Dorsolateral prefrontal cortex (tissue), 120 donors: ENCODE measurements at regions of chr12 and their contacts with region 1.

Region 1: DNA sequence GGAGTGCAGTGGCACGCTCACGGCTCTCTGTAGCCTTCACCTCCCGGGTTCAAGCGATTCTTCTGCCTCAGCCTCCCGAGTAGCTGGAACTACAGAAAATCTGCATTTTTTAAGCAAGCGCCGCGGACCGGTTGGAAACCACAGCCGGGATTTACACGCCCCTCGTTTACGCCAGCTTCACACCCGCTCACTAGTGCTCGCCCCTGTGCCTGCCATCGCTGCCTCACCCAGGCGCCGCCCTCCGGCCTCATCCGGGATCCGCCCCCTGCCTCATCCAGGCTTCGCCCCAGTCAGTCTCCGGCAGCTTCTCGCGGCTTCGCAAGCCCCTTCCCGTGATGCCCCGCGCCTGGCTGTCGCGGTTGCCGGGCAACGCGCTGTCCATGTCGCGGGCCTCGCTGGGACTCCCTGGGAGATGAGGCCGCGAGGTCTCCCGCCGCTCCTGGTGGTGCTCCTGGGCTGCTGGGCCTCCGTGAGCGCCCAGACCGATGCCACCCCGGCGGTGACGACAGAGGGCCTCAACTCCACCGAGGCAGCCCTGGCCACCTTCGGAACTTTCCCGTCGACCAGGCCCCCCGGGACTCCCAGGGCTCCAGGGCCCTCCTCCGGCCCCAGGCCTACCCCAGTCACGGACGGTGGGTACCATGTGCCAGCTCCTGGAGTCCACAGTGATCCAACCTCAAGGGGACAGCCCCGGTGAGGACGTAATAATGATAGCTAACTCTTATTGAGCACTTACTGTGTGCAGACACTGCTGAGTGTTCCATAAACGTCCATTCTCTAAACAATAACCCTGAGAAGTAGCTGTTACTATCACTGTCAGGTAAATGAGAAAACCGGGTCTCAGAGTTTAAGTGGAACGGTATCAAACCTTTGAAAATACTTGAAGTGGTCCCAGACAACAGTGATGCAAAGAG is at the start of gene TCTN1:
- DNase-seq: peak; percentile 94 to 98 (median 96)
- H3K4me3 ChIP-seq: peak within 1 kb of the TSS; percentile 61 to 98 (median 82)
- H3K27ac ChIP-seq: peak within 1 kb of the TSS in 58 of 59 donors; percentile 52 to 92 (median 81)
- H3K27me3 ChIP-seq: no peaks in the 10 kb centered on the region
- CTCF ChIP-seq: peak in 53 of 56 donors; percentile 13 to 68 (median 43)
- total RNA-seq, gene TCTN1: 26.4 to 77.4 (median 40.6) TPM

Region 2: DNA sequence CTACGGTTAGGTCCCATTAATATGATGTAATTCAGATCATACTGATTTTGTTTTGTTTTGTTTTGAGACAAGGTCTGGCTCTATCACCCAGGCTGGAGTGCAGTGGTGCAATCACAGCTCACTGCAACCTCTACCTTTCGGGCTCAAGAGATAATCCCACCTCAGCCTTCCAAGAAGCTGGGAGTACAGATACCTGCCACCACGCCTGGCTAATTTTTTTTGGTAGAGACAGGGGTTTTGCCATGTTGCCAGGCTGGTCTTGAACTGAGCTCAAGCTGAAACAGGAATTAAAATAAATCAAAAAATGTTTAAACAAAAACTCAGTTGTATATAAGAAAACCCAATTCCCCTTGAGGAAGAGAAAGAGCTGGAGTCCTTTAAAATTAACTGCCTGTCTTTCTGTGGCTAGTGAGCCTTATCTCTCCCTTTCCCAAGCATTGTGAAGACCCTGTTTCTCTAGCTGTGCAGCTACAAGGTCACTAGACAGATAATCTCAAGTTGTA is 192.8 kb before region 1 on chr12:
- intact Hi-C with region 1: no loop called
- DNase-seq: no peak
- H3K4me3 ChIP-seq: no peak overlapping the region
- H3K27ac ChIP-seq: peak overlapping the region in 7 of 59 donors; percentile 3 to 26 (median 12)
- H3K27me3 ChIP-seq: peaks cover 0 to 4% (median 0%) of the 10 kb centered on the region in 45 donors
- CTCF ChIP-seq: no peak

Region 3: DNA sequence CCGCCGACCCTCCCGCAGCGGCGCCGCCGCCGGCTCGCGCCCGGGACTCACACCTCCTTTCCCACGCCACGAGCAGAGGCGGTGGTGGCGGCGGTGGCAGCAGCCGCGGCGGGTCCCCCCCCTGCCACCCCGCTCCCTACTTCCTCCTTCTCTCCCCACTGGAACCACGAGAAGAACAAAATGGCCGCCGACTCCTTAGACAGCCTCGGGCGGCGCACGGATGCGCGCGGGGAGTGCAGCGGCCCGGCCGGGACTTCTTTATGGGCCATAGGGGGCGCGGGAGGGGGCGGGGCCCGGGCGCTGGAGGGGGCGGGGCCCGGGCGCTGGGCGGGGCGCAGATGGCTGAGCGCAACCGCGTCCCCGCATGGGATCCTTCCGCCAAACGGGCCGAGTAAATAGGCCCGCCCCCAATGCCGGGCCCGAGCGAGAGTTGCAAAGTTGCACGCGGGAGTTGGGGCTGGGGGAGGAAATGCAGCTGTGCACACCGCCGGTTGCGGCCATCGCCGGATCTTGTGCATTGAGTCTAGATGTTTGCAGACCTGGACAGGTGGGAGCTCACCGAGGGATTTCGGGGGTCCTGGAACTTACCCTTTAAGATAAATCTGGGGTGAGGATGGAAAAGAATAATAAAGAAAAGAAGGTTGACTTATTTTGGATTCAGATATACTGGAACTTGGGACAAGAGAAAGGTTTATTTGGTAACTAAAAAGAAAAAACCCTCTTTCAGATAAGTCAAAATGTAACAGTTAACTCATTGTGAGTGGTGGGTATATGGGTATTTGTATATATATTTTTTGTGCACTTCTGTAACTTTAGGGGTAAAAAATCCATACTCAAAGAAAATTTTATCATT is 128.9 kb after region 1 on chr12 and contains the start of gene PPP1CC:
- intact Hi-C with region 1: loop called (anchors 5 kb)
- DNase-seq: peak; percentile 80 to 95 (median 92)
- H3K4me3 ChIP-seq: peak within 1 kb of the TSS; percentile 73 to 99 (median 96)
- H3K27ac ChIP-seq: peak within 1 kb of the TSS; percentile 52 to 97 (median 91)
- H3K27me3 ChIP-seq: no peaks in the 10 kb centered on the region
- CTCF ChIP-seq: peak in 37 of 56 donors; percentile 7 to 45 (median 23)
- total RNA-seq, gene PPP1CC: 59.0 to 118 (median 84.9) TPM